Activated CD8-positive, alpha-beta T cell treated with anti-CD3 and anti-CD28 coated beads for 36 hours (primary cell): ENCODE measurements at regions of chrX and their contacts with region 1.

Region 1: DNA sequence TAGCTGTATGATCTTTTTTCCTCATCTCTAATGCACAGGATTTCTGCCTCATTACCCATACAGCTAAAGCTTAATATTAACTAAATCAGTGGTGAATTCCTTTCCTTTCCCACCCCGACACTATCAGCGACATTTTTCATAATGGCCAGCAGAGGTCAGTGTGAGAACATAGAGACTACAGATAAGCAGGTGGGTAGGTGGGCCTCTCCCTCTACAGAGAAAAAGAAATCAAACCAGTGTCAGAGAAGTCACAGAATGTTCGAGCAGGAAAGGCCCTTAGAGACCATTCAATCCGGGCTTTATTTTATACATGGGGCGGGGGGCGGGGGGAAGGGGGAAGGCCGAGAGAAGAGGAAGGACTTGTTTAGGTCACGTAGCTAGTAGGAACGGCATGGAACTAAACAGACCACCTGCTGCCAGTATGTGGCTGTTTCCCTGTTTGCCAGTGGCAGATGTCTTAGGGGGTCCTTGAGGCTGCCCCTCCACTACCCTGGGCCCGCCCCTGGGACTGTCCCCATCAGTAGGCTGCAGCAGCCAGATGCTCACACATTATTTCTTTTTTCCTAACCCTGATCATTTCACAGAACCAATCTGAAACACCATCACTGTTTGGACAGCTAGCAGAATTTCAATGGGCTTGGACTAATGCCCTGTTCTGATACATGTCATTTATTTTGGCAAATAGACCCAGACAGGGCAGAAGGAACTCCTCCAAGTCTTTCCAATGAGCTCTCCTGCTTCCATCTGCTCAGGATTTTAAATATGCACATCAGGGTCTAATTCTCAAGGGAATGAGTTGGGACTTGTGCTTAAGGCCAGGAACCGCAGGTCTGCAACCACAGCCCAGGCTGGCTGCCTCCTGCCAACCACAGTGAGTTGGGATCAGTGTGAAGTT is 133.4 kb downstream of the ATG4A start:
- DNase-seq: peak; percentile 2
- ATAC-seq: no peak
- H3K4me3 Mint-ChIP-seq: no peak overlapping the region
- H3K27ac Mint-ChIP-seq: no peak overlapping the region
- H3K4me1 Mint-ChIP-seq: peaks cover 3% of the 10 kb centered on the region
- H3K27me3 Mint-ChIP-seq: no peaks in the 10 kb centered on the region
- CTCF ChIP-seq: peak; percentile 40

Region 2: DNA sequence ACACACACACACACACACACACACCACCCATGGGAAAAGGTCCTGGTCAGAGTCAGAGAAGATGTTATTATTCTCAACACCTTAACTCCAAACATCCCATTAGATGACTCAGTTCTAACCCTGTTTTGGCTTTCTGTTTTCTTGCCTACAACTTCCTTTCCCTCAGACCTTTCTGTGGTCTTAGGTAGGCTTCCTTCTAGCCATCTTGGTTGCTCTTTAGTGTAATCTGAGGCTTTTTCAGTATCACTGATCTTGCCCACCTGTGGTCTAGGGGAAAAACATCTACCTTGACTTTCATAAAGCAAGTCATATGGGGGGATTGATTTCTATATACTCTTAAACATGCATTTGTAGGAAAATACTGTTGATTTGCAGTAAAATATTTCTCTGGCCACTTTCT is 76.5 kb before region 1 on chrX:
- CTCF ChIA-PET with region 1: no interaction called
- POLR2A ChIA-PET with region 1: no interaction called
- intact Hi-C with region 1: no loop called
- DNase-seq: peak; percentile 25
- ATAC-seq: peak; percentile 77
- H3K4me3 Mint-ChIP-seq: no peak overlapping the region
- H3K27ac Mint-ChIP-seq: no peak overlapping the region
- H3K4me1 Mint-ChIP-seq: peaks cover 16% of the 10 kb centered on the region
- H3K27me3 Mint-ChIP-seq: no peaks in the 10 kb centered on the region
- CTCF ChIP-seq: no peak

Region 3: GRCh38 chrX:108171671-108172070 is 53.3 kb before region 1 on chrX:
- CTCF ChIA-PET with region 1: no interaction called
- POLR2A ChIA-PET with region 1: no interaction called
- intact Hi-C with region 1: loop called (anchors 5 kb)
- DNase-seq: no peak
- ATAC-seq: no peak
- H3K4me3 Mint-ChIP-seq: no peak overlapping the region
- H3K27ac Mint-ChIP-seq: no peak overlapping the region
- H3K4me1 Mint-ChIP-seq: no peaks in the 10 kb centered on the region
- H3K27me3 Mint-ChIP-seq: no peaks in the 10 kb centered on the region
- CTCF ChIP-seq: no peak

Region 4: GRCh38 chrX:108235986-108236385 is 11.0 kb after region 1 on chrX:
- CTCF ChIA-PET with region 1: interaction called, 19 read pairs
- POLR2A ChIA-PET with region 1: no interaction called
- intact Hi-C with region 1: no loop called
- DNase-seq: no peak
- ATAC-seq: no peak
- H3K4me3 Mint-ChIP-seq: no peak overlapping the region
- H3K27ac Mint-ChIP-seq: no peak overlapping the region
- H3K4me1 Mint-ChIP-seq: no peaks in the 10 kb centered on the region
- H3K27me3 Mint-ChIP-seq: no peaks in the 10 kb centered on the region
- CTCF ChIP-seq: no peak

Region 5: GRCh38 chrX:108270739-108271396 is 45.9 kb after region 1 on chrX:
- CTCF ChIA-PET with region 1: no interaction called
- POLR2A ChIA-PET with region 1: no interaction called
- intact Hi-C with region 1: no loop called
- DNase-seq: no peak
- ATAC-seq: no peak
- H3K4me3 Mint-ChIP-seq: no peak overlapping the region
- H3K27ac Mint-ChIP-seq: no peak overlapping the region
- H3K4me1 Mint-ChIP-seq: no peaks in the 10 kb centered on the region
- H3K27me3 Mint-ChIP-seq: peaks cover 3% of the 10 kb centered on the region
- CTCF ChIP-seq: no peak

Region 6: GRCh38 chrX:108304210-108304609 is 79.2 kb after region 1 on chrX:
- CTCF ChIA-PET with region 1: interaction called, 3 read pairs
- POLR2A ChIA-PET with region 1: no interaction called
- intact Hi-C with region 1: loop called (anchors 10 kb)
- DNase-seq: no peak
- ATAC-seq: no peak
- H3K4me3 Mint-ChIP-seq: no peak overlapping the region
- H3K27ac Mint-ChIP-seq: no peak overlapping the region
- H3K4me1 Mint-ChIP-seq: no peaks in the 10 kb centered on the region
- H3K27me3 Mint-ChIP-seq: peaks cover 1% of the 10 kb centered on the region
- CTCF ChIP-seq: no peak

Region 7: GRCh38 chrX:108366644-108367406 is 141.9 kb after region 1 on chrX:
- CTCF ChIA-PET with region 1: no interaction called
- POLR2A ChIA-PET with region 1: no interaction called
- intact Hi-C with region 1: no loop called
- DNase-seq: no peak
- ATAC-seq: no peak
- H3K4me3 Mint-ChIP-seq: no peak overlapping the region
- H3K27ac Mint-ChIP-seq: no peak overlapping the region
- H3K4me1 Mint-ChIP-seq: no peaks in the 10 kb centered on the region
- H3K27me3 Mint-ChIP-seq: no peaks in the 10 kb centered on the region
- CTCF ChIP-seq: no peak